Activated CD8-positive, alpha-beta T cell treated with anti-CD3 and anti-CD28 coated beads for 36 hours (primary cell): ENCODE measurements at regions of chr1 and their contacts with region 1.

Region 1: GRCh38 chr1:27858072-27858958 is 14.0 kb upstream of the THEMIS2 start:
- DNase-seq: peak; percentile 92
- ATAC-seq: peak; percentile 99
- H3K4me3 Mint-ChIP-seq: no peak overlapping the region
- H3K27ac Mint-ChIP-seq: no peak overlapping the region
- H3K4me1 Mint-ChIP-seq: peaks cover 9% of the 10 kb centered on the region
- H3K27me3 Mint-ChIP-seq: no peaks in the 10 kb centered on the region
- CTCF ChIP-seq: peak; percentile 99

Region 2: GRCh38 chr1:27365372-27366112 is 492.8 kb before region 1 on chr1:
- CTCF ChIA-PET with region 1: no interaction called
- POLR2A ChIA-PET with region 1: no interaction called
- intact Hi-C with region 1: no loop called
- DNase-seq: peak; percentile 90
- ATAC-seq: peak; percentile 76
- H3K4me3 Mint-ChIP-seq: peak overlapping the region; percentile 82
- H3K27ac Mint-ChIP-seq: peak overlapping the region; percentile 71
- H3K4me1 Mint-ChIP-seq: peaks cover 18% of the 10 kb centered on the region
- H3K27me3 Mint-ChIP-seq: no peaks in the 10 kb centered on the region
- CTCF ChIP-seq: no peak

Region 3: GRCh38 chr1:27835501-27835900 is 22.8 kb before region 1 on chr1:
- CTCF ChIA-PET with region 1: interaction called, 23 read pairs
- POLR2A ChIA-PET with region 1: no interaction called
- intact Hi-C with region 1: no loop called
- DNase-seq: no peak
- ATAC-seq: no peak
- H3K4me3 Mint-ChIP-seq: no peak overlapping the region
- H3K27ac Mint-ChIP-seq: peak overlapping the region; percentile 32
- H3K4me1 Mint-ChIP-seq: peaks cover 30% of the 10 kb centered on the region
- H3K27me3 Mint-ChIP-seq: no peaks in the 10 kb centered on the region
- CTCF ChIP-seq: no peak

Region 4: GRCh38 chr1:27872059-27872801 is 13.9 kb after region 1 on chr1 and contains the start of gene THEMIS2:
- CTCF ChIA-PET with region 1: interaction called, 11 read pairs
- POLR2A ChIA-PET with region 1: interaction called, 3 read pairs
- intact Hi-C with region 1: no loop called
- DNase-seq: peak; percentile 81
- ATAC-seq: peak; percentile 87
- H3K4me3 Mint-ChIP-seq: peak within 1 kb of the TSS; percentile 88
- H3K27ac Mint-ChIP-seq: peak within 1 kb of the TSS; percentile 75
- H3K4me1 Mint-ChIP-seq: peaks cover 40% of the 10 kb centered on the region
- H3K27me3 Mint-ChIP-seq: no peaks in the 10 kb centered on the region
- CTCF ChIP-seq: no peak
- total RNA-seq, gene THEMIS2: 13.8 to 16.0 TPM

Region 5: GRCh38 chr1:27979151-27979858 is 121.0 kb after region 1 on chr1:
- CTCF ChIA-PET with region 1: interaction called, 32 read pairs
- POLR2A ChIA-PET with region 1: interaction called, 3 read pairs
- intact Hi-C with region 1: loop called (anchors 5 kb)
- DNase-seq: no peak
- ATAC-seq: peak; percentile 64
- H3K4me3 Mint-ChIP-seq: no peak overlapping the region
- H3K27ac Mint-ChIP-seq: no peak overlapping the region
- H3K4me1 Mint-ChIP-seq: no peaks in the 10 kb centered on the region
- H3K27me3 Mint-ChIP-seq: no peaks in the 10 kb centered on the region
- CTCF ChIP-seq: peak; percentile 56